MCF 10A (cell line): ENCODE measurements at regions of chr3 and their contacts with region 1.

Region 1: DNA sequence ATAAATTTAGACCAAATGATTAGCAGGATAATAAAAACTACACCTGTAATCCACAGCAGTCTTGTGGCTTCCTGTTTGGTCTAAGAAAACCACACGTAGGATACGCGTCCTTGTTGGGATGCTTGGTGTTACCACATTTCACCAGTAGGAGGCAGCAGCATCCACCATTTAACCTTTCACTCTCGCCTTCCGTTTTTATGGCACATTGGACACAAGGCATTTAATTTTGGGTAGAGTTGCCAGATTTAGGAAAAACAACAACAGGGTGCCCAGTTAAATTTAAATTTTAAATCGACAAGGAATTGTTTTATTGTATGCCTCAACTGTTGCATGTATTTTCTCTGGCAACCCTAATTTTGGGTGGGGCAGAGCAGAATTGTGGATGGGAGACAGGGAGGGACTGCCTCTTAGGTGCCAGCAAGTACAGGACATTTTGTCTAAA is 6.3 kb downstream of the LRRC31 start:
- DNase-seq: peak; percentile 85
- H3K4me3 Mint-ChIP-seq: no peak overlapping the region
- H3K27ac Mint-ChIP-seq: no peak overlapping the region
- H3K4me1 Mint-ChIP-seq: no peaks in the 10 kb centered on the region
- H3K27me3 Mint-ChIP-seq: no peaks in the 10 kb centered on the region
- CTCF ChIP-seq: peak; percentile 93

Region 2: DNA sequence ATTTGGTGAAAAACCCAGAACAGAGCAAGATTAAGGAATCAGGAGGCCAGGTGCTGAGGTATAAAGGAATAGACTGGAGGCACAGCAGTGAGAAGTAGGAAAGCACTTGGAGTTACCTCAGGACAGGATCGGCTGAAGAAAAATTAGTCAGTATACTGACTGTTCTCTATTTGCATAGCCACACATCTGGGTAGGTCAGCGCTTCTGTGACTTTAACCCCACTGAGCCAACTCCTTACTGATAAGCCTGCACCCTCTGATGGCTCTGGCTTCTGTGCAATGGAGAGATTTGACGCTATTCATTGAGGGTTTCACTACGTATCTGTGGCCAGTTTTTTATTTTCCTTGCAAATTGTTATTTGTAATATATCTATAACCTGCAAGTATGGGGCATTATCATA is 222.3 kb before region 1 on chr3:
- CTCF ChIA-PET with region 1: no interaction called
- POLR2A ChIA-PET with region 1: no interaction called
- intact Hi-C with region 1: no loop called
- DNase-seq: no peak
- H3K4me3 Mint-ChIP-seq: no peak overlapping the region
- H3K27ac Mint-ChIP-seq: no peak overlapping the region
- H3K4me1 Mint-ChIP-seq: no peaks in the 10 kb centered on the region
- H3K27me3 Mint-ChIP-seq: no peaks in the 10 kb centered on the region
- CTCF ChIP-seq: no peak

Region 3: GRCh38 chr3:169699536-169700050 is 163.9 kb before region 1 on chr3:
- CTCF ChIA-PET with region 1: no interaction called
- POLR2A ChIA-PET with region 1: no interaction called
- intact Hi-C with region 1: no loop called
- DNase-seq: peak; percentile 71
- H3K4me3 Mint-ChIP-seq: no peak overlapping the region
- H3K27ac Mint-ChIP-seq: peak overlapping the region; percentile 52
- H3K4me1 Mint-ChIP-seq: no peaks in the 10 kb centered on the region
- H3K27me3 Mint-ChIP-seq: no peaks in the 10 kb centered on the region
- CTCF ChIP-seq: no peak

Region 4: GRCh38 chr3:169764452-169765274 is 98.8 kb before region 1 on chr3 and contains the start of gene TERC:
- CTCF ChIA-PET with region 1: no interaction called
- POLR2A ChIA-PET with region 1: no interaction called
- intact Hi-C with region 1: loop called (anchors 1 kb)
- DNase-seq: peak; percentile 95
- H3K4me3 Mint-ChIP-seq: peak within 1 kb of the TSS; percentile 75
- H3K27ac Mint-ChIP-seq: peak within 1 kb of the TSS; percentile 94
- H3K4me1 Mint-ChIP-seq: peaks cover 10% of the 10 kb centered on the region
- H3K27me3 Mint-ChIP-seq: no peaks in the 10 kb centered on the region
- CTCF ChIP-seq: no peak
- total RNA-seq, gene TERC: 2.9 and 7.9 TPM in 2 replicates

Region 5: GRCh38 chr3:169966428-169966950 is 103.0 kb after region 1 on chr3 and contains the start of gene SEC62:
- CTCF ChIA-PET with region 1: interaction called, 8 read pairs
- POLR2A ChIA-PET with region 1: interaction called, 4 read pairs
- intact Hi-C with region 1: loop called (anchors 1 kb)
- DNase-seq: peak; percentile 90
- H3K4me3 Mint-ChIP-seq: peak within 1 kb of the TSS; percentile 68
- H3K27ac Mint-ChIP-seq: peak within 1 kb of the TSS; percentile 99
- H3K4me1 Mint-ChIP-seq: peaks cover 17% of the 10 kb centered on the region
- H3K27me3 Mint-ChIP-seq: no peaks in the 10 kb centered on the region
- CTCF ChIP-seq: no peak
- total RNA-seq, gene SEC62: 58.5 and 62.1 TPM in 2 replicates

Region 6: GRCh38 chr3:170037463-170038433 is 174.3 kb after region 1 on chr3 and contains the start of gene GPR160:
- CTCF ChIA-PET with region 1: interaction called, 3 read pairs
- POLR2A ChIA-PET with region 1: no interaction called
- intact Hi-C with region 1: loop called (anchors 5 kb)
- DNase-seq: peak; percentile 70
- H3K4me3 Mint-ChIP-seq: peak within 1 kb of the TSS; percentile 65
- H3K27ac Mint-ChIP-seq: no peak within 1 kb of the TSS
- H3K4me1 Mint-ChIP-seq: no peaks in the 10 kb centered on the region
- H3K27me3 Mint-ChIP-seq: no peaks in the 10 kb centered on the region
- CTCF ChIP-seq: peak; percentile 84
- total RNA-seq, gene GPR160: 1.8 and 2.6 TPM in 2 replicates

Region 7: GRCh38 chr3:170054204-170054603 is 190.7 kb after region 1 on chr3:
- CTCF ChIA-PET with region 1: no interaction called
- POLR2A ChIA-PET with region 1: no interaction called
- intact Hi-C with region 1: loop called (anchors 1 kb)
- DNase-seq: peak; percentile 24
- H3K4me3 Mint-ChIP-seq: no peak overlapping the region
- H3K27ac Mint-ChIP-seq: no peak overlapping the region
- H3K4me1 Mint-ChIP-seq: no peaks in the 10 kb centered on the region
- H3K27me3 Mint-ChIP-seq: no peaks in the 10 kb centered on the region
- CTCF ChIP-seq: peak; percentile 3